ENCODE measurements at regions of chr20 and their contacts with region 1.

Region 1: DNA sequence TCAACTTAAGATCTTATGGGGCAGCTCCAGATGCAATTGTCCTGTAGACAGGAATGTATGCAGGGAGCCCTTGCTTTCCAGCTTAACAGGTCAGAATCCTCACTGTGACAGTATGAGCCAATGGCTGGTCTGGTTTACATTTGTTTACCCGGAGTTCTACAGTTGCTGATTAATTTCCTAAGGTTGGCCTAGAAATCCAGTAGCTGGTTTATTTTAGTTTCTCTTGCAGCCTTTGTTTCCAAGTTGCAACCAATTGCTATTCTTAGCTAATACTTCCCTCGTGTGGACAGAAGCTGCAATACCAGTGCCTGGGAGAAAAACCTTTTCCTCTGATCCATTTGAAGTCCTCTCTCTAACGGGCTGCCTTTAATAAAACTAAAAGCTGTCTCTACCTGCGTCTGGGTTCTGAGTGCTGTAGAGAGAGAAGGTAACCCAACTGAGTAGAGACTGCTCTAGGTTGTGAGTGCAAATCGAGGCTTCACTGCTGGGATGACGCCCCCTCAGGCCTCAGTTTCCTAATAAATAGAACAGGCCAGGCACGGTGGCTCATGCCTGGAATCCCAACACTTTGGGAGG is 45.9 kb downstream of the ZNF217 start:
- DNase-seq: no peak
- ATAC-seq: peak; percentile 71 to 75

Region 2: GRCh38 chr20:52127309-52127708 is 1420.4 kb before region 1 on chr20:
- intact Hi-C with region 1: loop called in 1 of 2 experiments (anchors 5 kb)
- DNase-seq: no peak
- ATAC-seq: no peak

Region 3: GRCh38 chr20:52242237-52243230 is 1305.2 kb before region 1 on chr20:
- intact Hi-C with region 1: loop called in 1 of 2 experiments (anchors 5 kb)
- DNase-seq: no peak
- ATAC-seq: no peak

Region 4: DNA sequence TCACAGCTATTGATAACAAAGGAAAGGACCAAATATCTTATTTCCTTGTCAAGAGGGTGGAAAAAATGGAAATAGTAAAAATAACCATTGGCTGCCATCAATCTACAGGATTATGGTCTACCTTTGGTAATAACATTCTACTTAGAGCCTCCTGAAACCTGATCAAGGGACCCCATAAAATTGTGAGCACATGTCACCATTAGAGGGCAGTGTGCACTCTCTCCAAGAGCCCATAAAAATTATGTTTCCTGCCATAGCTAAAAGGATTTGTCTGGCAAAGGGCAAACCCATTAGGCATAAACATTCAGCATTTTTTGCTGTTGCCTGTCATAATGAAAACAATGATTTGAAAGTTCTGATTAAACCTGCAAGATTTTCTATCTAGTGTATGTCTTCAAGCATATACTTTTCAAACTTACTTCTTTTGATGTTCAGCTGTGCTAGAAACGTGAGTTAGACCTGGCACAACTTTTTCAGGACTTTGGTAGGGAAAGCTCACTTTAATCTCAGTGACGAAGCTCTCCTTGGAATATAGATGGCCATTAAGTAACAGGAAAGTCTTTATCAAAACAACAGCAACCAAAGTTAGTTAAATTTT is 1235.5 kb before region 1 on chr20:
- intact Hi-C with region 1: loop called in 1 of 2 experiments (anchors 5 kb)
- DNase-seq: peak; percentile 19
- ATAC-seq: peak in 1 of 2 donors; percentile 58

Region 5: DNA sequence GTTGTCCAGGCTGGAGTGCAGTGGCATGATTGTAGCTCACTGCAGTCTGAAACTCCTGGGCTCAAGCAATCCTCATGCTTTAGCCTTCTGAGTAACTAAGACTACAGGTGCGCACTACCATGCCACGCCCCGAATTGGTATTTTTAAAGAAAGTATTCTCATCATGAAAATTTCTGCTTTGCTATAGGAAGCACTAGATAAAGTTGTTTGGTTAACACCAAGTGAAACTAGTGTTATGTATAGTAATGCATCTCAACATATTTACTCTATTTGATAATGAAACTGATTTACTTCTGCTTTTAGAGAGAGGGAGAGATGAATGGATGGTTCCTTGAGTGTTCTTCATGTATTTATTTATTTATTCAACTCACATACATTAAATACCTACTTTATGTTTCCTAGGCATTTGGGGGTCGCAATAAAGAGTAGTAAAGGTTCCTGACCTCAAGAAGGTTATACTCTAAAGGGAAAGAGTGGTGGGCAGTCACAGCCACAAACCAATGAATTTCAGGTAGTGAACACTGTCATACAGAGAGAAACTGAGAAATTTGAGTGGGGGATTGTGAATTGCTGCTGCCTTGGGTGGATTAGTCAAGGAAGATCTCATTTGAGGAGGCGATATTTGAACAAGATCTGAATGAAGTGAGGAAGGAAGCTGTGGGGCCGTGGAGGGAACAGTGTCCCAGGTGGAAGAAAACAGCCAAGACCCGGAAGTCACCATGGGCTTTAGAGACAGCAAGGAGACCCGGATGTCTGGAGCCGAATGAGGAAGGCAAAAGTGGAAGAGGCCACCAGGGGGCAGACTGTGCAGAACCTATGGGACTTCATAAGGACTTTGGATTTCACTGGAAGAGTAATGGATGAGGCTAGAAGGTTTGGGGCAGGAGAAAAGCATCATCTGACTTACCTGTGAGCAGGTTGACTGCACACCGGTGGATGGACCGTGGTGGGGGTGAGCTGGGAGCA is 390.0 kb before region 1 on chr20:
- intact Hi-C with region 1: loop called in 1 of 2 experiments (anchors 10 kb)
- DNase-seq: peak; percentile 38
- ATAC-seq: no peak

Region 6: GRCh38 chr20:53857723-53858236 is 310.0 kb after region 1 on chr20:
- intact Hi-C with region 1: no loop called
- DNase-seq: peak; percentile 45
- ATAC-seq: peak in 1 of 2 donors; percentile 39